ENCODE measurements at regions of chr13 and their contacts with region 1.

Region 1: DNA sequence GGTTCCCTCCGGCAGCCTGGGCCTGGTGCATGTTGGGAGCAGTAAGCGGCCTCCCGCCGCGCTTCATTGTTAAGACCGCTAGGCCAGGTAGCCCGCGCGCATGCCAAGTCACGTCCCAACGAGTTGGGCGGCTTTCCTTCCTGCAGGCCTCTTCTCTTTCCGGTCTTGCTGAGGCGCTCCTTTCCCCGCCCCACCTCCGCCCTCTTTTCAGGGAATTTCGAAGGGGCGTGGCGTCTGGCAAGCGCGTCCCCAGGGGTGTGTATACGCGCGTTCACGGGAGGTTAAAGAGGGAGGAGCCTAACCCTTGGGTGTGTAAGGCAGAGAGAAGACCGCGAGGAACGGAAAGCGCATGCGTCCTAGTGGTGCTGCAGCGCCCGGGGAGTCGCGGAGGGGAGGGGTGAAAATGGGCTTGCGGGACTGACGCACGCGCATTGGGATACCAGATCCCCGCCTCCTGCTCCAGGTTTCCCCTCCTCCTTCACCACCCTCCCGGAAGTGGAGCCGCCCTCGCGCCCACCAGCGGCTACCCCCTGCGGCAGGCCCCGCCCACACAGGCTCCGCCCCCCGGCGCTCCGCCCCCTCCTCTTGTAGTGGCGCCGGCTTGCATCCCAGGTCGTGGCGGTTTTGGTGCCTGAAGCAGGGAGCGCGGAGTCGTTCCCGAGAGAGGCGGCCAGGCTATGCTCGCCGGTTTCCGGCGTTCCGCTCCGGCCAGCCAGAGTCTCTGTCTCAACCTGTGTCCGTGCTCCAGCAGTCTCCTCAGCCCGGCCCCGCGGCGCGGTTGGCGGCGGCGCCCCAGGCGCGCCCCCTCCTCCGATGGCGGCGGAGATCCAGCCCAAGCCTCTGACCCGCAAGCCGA is at the start of gene WDFY2:
- DNase-seq: peak; percentile 100
- ATAC-seq: peak; percentile 80
- H3K4me3 ChIP-seq: peak within 1 kb of the TSS; percentile 68 to 94 (median 91)
- H3K4me3 Mint-ChIP-seq: peak within 1 kb of the TSS; percentile 97
- H3K27ac ChIP-seq: peak within 1 kb of the TSS; percentile 81 to 88
- H3K27ac Mint-ChIP-seq: peak within 1 kb of the TSS; percentile 98
- H3K4me1 ChIP-seq: peaks cover 12 to 14% of the 10 kb centered on the region in 2 donors
- H3K4me1 Mint-ChIP-seq: peaks cover 35% of the 10 kb centered on the region
- H3K27me3 ChIP-seq: no peaks in the 10 kb centered on the region
- H3K27me3 Mint-ChIP-seq: no peaks in the 10 kb centered on the region
- CTCF ChIP-seq: no peak
- total RNA-seq, gene WDFY2: 46.1 and 47.7 TPM in 2 replicates

Region 2: DNA sequence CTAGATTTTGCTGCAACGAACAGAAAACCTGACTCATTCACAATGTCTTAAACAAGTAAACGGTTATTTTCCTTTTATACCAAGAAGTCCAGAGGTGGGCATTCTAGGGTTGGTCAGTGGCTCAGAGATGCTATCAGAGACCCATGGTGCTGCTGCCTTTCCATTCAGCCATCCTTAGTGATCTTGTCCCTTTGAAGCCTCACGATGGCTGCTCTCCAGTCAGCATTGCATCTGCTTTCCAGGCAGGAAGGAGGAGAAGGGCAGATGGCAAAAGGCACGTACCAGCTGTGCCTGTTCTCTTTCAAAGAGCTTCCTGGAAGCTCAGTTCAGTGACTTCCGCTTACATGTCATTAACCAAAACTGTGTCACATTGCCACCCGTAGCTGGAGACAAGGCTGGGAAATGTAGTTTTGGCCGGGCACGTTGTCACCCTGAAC is 30.3 kb after region 1 on chr13:
- CTCF ChIA-PET with region 1: interaction called, 5 read pairs
- POLR2A ChIA-PET with region 1: interaction called, 4 read pairs
- intact Hi-C with region 1: loop called (anchors 1 kb)
- DNase-seq: peak; percentile 69
- ATAC-seq: peak; percentile 83
- H3K4me3 ChIP-seq: peak overlapping the region; percentile 6 to 56 (median 48)
- H3K4me3 Mint-ChIP-seq: peak overlapping the region; percentile 88
- H3K27ac ChIP-seq: peak overlapping the region; percentile 55 to 86
- H3K27ac Mint-ChIP-seq: peak overlapping the region; percentile 98
- H3K4me1 ChIP-seq: peaks cover 44 to 46% of the 10 kb centered on the region in 2 donors
- H3K4me1 Mint-ChIP-seq: peaks cover 52% of the 10 kb centered on the region
- H3K27me3 ChIP-seq: no peaks in the 10 kb centered on the region
- H3K27me3 Mint-ChIP-seq: no peaks in the 10 kb centered on the region
- CTCF ChIP-seq: no peak

Region 3: DNA sequence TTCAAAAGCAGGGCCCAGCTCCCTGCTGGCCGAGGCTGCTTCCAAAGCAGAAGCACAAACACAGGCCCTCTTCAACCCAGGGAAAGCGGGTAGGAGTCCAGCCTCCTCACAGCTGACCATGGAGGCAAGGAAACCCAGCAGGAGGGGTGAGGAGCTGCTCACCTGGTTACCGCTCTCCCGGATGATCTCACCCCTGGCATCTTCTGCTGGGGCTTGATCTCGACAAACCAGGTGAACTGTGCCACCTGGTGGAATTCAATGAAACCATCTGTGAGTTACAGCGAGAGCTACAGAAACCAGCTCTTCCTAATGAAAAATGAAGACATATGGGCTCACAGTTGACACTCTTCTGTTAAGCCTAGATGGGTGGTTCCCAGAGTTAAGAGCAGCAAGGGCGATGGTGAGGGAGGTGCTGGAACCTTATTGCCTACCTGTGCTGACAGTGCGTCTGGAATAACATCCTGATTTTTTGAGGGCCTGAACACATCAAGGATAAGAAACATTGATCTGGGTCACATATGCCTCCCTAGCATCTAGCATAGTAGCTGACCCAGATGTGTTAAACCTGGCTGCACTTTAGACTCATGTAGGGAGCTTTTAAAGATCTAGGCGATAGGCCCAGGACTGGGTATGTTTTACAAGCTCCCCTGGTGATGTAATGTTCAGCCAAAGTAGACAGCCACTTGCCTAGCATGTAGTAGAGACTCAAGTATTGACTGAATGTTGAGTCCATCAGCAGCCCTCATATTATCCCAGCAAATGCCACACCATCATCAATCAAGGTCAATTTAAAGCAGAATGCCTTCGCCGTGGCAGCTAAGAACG is 213.8 kb after region 1 on chr13:
- CTCF ChIA-PET with region 1: interaction called, 18 read pairs
- POLR2A ChIA-PET with region 1: interaction called, 6 read pairs
- intact Hi-C with region 1: loop called (anchors 1 kb)
- DNase-seq: peak; percentile 76
- ATAC-seq: peak; percentile 60
- H3K4me3 ChIP-seq: no peak overlapping the region
- H3K4me3 Mint-ChIP-seq: no peak overlapping the region
- H3K27ac ChIP-seq: no peak overlapping the region
- H3K27ac Mint-ChIP-seq: peak overlapping the region; percentile 5
- H3K4me1 ChIP-seq: peaks cover 37 to 39% of the 10 kb centered on the region in 2 donors
- H3K4me1 Mint-ChIP-seq: peaks cover 45% of the 10 kb centered on the region
- H3K27me3 ChIP-seq: no peaks in the 10 kb centered on the region
- H3K27me3 Mint-ChIP-seq: no peaks in the 10 kb centered on the region
- CTCF ChIP-seq: peak; percentile 68

Region 4: DNA sequence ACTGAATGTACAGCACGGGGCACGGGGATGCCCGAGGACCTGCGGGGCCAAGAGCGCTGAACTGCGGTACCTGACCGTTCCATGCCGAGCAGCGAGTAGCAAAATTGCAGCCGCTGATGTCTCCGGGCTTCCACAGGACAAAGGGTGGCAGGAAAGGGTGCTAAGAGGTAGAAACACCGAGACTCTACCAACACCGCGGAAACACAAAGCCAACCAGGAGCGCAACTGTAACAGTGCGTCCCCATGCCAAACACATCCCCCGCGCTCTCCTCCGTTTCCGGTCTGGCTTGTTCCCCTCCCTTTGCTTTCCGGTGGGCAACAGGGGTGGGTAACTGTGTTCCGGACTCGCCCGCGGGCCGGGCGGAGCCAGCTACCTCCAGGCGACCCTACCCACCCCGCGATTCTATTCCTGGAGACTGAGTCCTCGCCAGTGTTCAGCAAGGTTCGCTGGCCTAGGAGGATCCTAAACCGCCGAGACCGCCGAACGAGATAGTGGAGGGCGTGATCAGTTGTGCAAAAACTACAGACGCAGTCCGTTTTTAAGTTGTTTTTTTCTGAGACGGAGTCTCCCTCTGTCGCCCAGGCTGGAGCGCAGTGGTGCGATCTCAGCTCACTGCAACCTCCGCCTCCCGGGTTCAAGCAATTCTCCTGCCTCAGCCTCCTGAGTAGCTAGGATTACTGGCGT is 610.2 kb after region 1 on chr13:
- CTCF ChIA-PET with region 1: no interaction called
- POLR2A ChIA-PET with region 1: interaction called, 3 read pairs
- intact Hi-C with region 1: loop called (anchors 10 kb)
- DNase-seq: peak; percentile 91
- ATAC-seq: peak; percentile 84
- H3K4me3 ChIP-seq: peak overlapping the region; percentile 69 to 97 (median 95)
- H3K4me3 Mint-ChIP-seq: peak overlapping the region; percentile 99
- H3K27ac ChIP-seq: peak overlapping the region; percentile 57 to 75
- H3K27ac Mint-ChIP-seq: peak overlapping the region; percentile 98
- H3K4me1 ChIP-seq: peaks cover 8 to 16% of the 10 kb centered on the region in 2 donors
- H3K4me1 Mint-ChIP-seq: peaks cover 21% of the 10 kb centered on the region
- H3K27me3 ChIP-seq: no peaks in the 10 kb centered on the region
- H3K27me3 Mint-ChIP-seq: no peaks in the 10 kb centered on the region
- CTCF ChIP-seq: no peak

Measured in B cell (primary cell).